ENCODE measurements at regions of chr13 and their contacts with region 1.

Region 1: DNA sequence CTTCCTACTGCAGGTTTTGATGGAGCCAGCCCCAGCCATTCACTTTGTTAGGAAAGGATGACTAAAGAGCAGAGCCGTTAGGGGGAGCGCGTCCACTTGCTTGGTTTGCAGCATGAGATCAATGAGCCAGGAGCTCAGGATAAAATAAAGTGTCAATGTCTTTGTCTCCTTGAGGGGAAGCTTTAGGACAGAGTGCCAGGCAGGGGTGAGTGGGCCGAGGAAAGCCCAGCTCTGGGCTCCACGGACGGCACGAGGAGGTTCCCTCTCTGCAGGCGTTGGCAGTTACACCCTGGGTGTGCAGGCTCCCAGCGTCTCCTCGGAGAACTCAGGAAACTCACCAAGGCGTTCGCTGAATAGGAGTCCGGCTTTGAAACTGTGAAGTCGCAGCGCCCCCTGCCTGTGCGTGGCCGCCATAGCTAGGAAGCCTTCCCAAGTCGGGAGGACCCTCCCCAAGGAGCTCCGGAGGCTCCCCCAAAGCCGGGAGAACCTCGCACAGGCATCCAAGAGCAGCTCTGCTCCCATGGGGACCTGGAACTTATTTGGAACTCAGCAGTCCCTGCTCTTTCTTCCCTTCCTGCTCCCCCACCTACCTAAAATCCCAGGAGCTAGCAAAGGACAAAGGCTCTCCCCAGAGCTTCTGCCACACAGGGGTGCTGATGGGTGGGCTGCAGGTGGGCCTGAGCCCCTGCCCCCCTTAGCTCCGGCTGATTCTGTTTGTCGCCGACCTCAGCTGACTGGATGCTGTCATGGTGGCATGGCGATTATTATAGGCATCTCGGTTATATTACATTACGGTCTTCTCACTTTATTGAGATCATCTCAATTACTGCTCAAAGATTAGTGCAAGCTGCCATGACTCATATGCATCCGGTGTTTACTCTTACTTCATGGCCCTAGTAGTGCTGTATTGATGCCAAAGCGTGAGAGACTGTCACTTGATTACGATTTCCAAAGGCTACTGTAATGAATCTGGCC is 34.4 kb downstream of the GSX1 start:
- DNase-seq: peak; percentile 57 to 85 (median 78)
- H3K4me3 ChIP-seq: no peak overlapping the region
- H3K27ac ChIP-seq: no peak overlapping the region
- H3K4me1 ChIP-seq: no peaks in the 10 kb centered on the region
- H3K27me3 ChIP-seq: no peaks in the 10 kb centered on the region
- CTCF ChIP-seq: peak; percentile 65 to 80 (median 67)
- EP300 ChIP-seq: no peak
- POLR2A ChIP-seq: no peak

Region 2: DNA sequence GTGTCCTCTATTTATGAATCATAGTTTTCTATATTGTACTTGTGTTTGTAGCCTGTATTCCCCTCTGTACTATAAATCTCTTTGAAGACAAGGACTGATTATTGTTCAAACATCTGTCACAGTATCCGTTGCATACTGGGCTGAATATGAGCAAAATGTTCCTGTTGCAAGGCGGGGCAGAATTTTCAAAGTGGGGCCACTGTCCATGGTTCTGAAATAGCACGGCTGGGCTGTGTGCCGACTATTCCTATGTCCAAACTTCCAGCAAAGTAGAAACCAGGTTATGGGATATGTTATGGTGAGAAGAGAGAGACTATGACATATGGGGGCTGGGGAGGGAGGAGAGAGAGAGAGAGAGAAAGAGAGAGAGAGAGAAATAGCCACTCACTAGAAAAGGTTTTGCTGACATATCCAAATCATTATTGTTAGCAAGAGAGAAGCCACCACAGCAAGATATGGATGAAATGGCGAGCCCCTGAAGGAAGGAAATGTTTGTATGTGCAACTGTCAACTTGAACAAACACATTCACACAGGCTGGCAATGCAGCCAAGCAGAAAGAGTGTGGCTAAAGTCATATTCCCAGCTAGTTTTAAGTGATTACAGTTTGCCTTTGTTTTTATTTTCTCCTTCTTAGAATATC is 959.1 kb before region 1 on chr13:
- intact Hi-C with region 1: no loop called
- DNase-seq: no peak
- H3K4me3 ChIP-seq: no peak overlapping the region
- H3K27ac ChIP-seq: no peak overlapping the region
- H3K4me1 ChIP-seq: no peaks in the 10 kb centered on the region
- H3K27me3 ChIP-seq: no peaks in the 10 kb centered on the region
- CTCF ChIP-seq: no peak
- EP300 ChIP-seq: no peak
- POLR2A ChIP-seq: no peak

Region 3: DNA sequence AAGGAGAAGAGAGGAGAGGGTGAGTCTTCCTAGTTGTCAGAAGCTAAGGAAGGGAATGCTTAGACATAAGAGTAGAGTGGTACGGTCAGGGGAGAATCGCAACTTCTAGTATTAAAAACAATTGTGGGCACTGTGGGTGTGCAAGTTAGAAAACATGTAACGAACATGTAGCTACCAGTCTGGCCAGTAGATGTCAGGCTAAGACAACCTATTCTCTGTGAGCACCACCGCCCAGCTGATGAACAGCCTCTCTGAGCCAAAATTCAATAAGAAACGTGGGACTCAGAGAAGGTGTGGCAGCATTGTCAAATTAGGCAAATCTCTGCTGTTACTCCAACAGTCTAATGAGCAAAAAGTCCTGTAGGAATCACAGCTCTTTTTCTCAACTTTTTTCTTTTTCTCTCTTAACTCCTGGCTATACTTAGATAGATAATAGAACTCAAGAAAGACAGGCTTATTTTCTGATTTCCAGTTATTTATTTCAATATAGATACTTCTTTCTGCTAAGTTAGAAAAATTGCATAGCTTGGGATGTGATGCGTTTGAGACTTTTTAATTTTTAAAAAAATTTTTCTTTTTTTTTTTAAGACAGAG is 841.3 kb before region 1 on chr13:
- intact Hi-C with region 1: loop called in 2 of 4 experiments (anchors 5 to 10 kb)
- DNase-seq: peak; percentile 41 to 82 (median 55)
- H3K4me3 ChIP-seq: no peak overlapping the region
- H3K27ac ChIP-seq: no peak overlapping the region
- H3K4me1 ChIP-seq: peaks cover 9% of the 10 kb centered on the region
- H3K27me3 ChIP-seq: no peaks in the 10 kb centered on the region
- CTCF ChIP-seq: peak; percentile 57 to 85 (median 71)
- EP300 ChIP-seq: no peak
- POLR2A ChIP-seq: no peak

Region 4: GRCh38 chr13:27374650-27375049 is 452.0 kb before region 1 on chr13:
- intact Hi-C with region 1: loop called in 3 of 4 experiments (anchors 5 to 10 kb)
- DNase-seq: peak; percentile 50 to 68 (median 62)
- H3K4me3 ChIP-seq: no peak overlapping the region
- H3K27ac ChIP-seq: no peak overlapping the region
- H3K4me1 ChIP-seq: peaks cover 1% of the 10 kb centered on the region
- H3K27me3 ChIP-seq: no peaks in the 10 kb centered on the region
- CTCF ChIP-seq: peak; percentile 35 to 55 (median 44)
- EP300 ChIP-seq: no peak
- POLR2A ChIP-seq: no peak

Region 5: GRCh38 chr13:27896726-27897125 is 70.1 kb after region 1 on chr13:
- intact Hi-C with region 1: no loop called
- DNase-seq: no peak
- H3K4me3 ChIP-seq: no peak overlapping the region
- H3K27ac ChIP-seq: no peak overlapping the region
- H3K4me1 ChIP-seq: no peaks in the 10 kb centered on the region
- H3K27me3 ChIP-seq: no peaks in the 10 kb centered on the region
- CTCF ChIP-seq: no peak
- EP300 ChIP-seq: no peak
- POLR2A ChIP-seq: no peak

Region 6: GRCh38 chr13:27953676-27954405 is 127.2 kb after region 1 on chr13:
- intact Hi-C with region 1: loop called in 1 of 4 experiments (anchors 10 kb)
- DNase-seq: peak; percentile 59 to 83 (median 61)
- H3K4me3 ChIP-seq: peak overlapping the region; percentile 26
- H3K27ac ChIP-seq: no peak overlapping the region
- H3K4me1 ChIP-seq: peaks cover 5% of the 10 kb centered on the region
- H3K27me3 ChIP-seq: no peaks in the 10 kb centered on the region
- CTCF ChIP-seq: peak; percentile 31 to 76 (median 52)
- EP300 ChIP-seq: no peak
- POLR2A ChIP-seq: no peak

Measured in ovary (tissue), 10 donors.